GM12878 (cell line): ENCODE measurements at regions of chr12 and their contacts with region 1.

Region 1: DNA sequence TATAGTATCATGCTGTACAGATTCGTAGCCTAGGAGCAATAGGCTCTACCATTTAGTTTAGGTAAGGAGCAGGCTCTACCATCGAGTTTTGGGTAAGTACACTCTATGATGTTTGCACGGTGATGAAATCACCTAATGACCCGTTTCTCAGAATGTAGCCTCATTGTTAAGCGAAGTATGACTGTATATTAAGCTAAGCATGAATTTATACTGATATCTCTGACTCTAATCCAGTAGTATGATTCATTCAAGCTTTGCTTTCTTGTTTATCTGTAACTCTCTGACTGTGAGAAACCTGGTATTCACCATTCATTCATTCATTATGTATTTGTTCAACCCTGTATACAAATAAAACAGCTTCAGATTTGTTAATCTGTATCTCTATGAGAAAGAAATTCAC is 283.9 kb upstream of the PRICKLE1 start:
- DNase-seq: no peak
- ATAC-seq: no peak
- H3K4me3 ChIP-seq: no peak overlapping the region
- H3K27ac ChIP-seq: no peak overlapping the region
- H3K4me1 ChIP-seq: no peaks in the 10 kb centered on the region
- H3K27me3 ChIP-seq: no peaks in the 10 kb centered on the region
- CTCF ChIP-seq: no peak
- EP300 ChIP-seq: no peak
- POLR2A ChIP-seq: no peak
- RAD21 ChIP-seq: no peak

Region 2: GRCh38 chr12:42683933-42684801 is 189.2 kb before region 1 on chr12:
- CTCF ChIA-PET with region 1: no interaction called
- POLR2A ChIA-PET with region 1: no interaction called
- RAD21 ChIA-PET with region 1: no interaction called
- SMC1A ChIA-PET with region 1: no interaction called
- in situ Hi-C with region 1: no loop called
- intact Hi-C with region 1: loop called (anchors 10 kb)
- DNase-seq: no peak
- ATAC-seq: no peak
- H3K4me3 ChIP-seq: no peak overlapping the region
- H3K27ac ChIP-seq: no peak overlapping the region
- H3K4me1 ChIP-seq: no peaks in the 10 kb centered on the region
- H3K27me3 ChIP-seq: no peaks in the 10 kb centered on the region; a peak in 1 of 4 replicates
- CTCF ChIP-seq: no peak
- EP300 ChIP-seq: no peak
- POLR2A ChIP-seq: no peak
- RAD21 ChIP-seq: no peak